ENCODE measurements at regions of chr13 and their contacts with region 1.

Region 1: DNA sequence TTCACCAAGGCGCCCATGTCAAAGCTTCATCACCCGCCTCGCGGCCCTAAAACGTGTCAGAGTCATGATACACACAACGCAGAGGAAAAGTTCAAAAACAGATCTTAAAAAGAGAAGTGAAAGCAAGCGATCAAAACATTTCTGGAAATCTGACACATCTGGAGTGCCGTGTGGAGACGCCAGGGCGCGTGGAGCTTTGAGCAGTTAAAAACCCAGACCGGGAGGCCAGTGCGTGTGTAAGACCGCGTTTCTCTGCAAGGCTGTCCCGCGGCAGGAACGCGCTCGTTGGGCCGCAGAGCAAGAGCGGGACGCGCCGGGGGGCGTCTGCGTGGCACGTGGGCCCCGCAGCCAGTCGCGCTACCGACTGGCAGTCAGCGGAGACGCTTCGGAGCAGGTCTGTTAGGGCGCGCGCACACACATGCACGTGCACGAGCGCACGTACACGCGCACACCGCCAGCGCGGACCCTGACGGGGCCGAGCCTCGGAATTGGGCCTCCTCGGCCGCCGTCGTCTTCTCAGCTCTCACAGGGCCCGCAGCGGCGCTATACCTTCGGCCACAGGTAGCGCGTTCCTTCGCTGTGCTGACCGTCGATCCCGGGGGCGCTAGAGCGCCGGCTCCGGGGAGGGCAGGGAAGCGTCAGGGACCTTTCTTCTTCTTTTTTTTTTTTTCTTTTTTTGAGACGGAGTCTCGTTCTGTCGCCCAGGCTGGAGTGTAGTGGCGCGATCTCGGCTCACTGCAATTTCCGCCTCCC is 35.8 kb downstream of the RNF6 start:
- DNase-seq: peak; percentile 93
- H3K4me3 Mint-ChIP-seq: peak overlapping the region; percentile 86
- H3K27ac Mint-ChIP-seq: peak overlapping the region; percentile 95
- H3K4me1 Mint-ChIP-seq: peaks cover 21% of the 10 kb centered on the region
- H3K27me3 Mint-ChIP-seq: no peaks in the 10 kb centered on the region

Region 2: GRCh38 chr13:25980255-25980654 is 206.0 kb before region 1 on chr13:
- CTCF ChIA-PET with region 1: no interaction called
- POLR2A ChIA-PET with region 1: no interaction called
- intact Hi-C with region 1: no loop called
- DNase-seq: no peak
- H3K4me3 Mint-ChIP-seq: no peak overlapping the region
- H3K27ac Mint-ChIP-seq: no peak overlapping the region
- H3K4me1 Mint-ChIP-seq: peaks cover 7% of the 10 kb centered on the region
- H3K27me3 Mint-ChIP-seq: no peaks in the 10 kb centered on the region

Region 3: DNA sequence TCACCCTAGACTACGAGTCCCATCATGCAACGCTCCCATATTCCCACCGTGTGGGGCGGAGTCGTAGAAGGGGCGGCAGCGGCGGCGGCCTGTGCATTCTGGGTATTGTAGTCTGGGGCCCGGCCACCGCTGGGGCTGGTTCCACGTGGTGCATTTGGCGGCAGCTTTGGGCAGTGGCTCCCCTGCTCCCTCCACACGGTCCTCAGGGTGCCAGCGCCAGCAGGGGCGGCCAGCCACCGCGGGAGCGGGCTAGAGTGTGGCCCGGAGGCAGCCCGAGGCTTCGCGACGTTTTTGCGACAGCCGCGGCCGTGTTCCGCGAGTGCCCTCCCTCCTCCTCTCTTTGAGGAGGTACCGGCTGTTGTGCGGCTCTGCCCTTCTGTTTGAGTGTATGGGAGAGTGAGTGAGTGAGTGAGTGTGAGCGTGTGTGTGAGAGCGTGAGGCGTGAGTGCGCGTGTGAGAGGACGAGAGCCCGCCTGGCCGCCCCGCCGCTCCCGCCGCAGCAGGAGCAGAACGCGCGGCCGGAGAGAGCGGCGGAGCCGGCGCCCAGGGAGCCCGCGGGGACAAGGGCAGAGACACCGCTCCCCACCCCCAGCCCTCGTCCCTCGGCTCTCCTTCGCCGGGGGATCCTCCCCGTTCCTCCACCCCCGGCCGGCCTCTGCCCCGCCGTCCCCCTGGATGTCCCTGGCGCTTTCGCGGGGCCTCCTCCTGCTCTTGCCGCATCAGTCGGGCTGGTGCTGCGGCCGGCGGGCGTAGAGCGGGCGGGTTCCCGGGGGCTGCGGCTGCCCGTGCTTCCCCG is 67.7 kb after region 1 on chr13 and contains the start of gene CDK8:
- CTCF ChIA-PET with region 1: interaction called, 23 read pairs
- POLR2A ChIA-PET with region 1: no interaction called
- intact Hi-C with region 1: loop called (anchors 1 kb)
- DNase-seq: peak; percentile 91
- H3K4me3 Mint-ChIP-seq: peak within 1 kb of the TSS; percentile 84
- H3K27ac Mint-ChIP-seq: peak within 1 kb of the TSS; percentile 67
- H3K4me1 Mint-ChIP-seq: peaks cover 37% of the 10 kb centered on the region
- H3K27me3 Mint-ChIP-seq: no peaks in the 10 kb centered on the region
- total RNA-seq, gene CDK8: 14.6 to 15.0 TPM

Region 4: GRCh38 chr13:26406791-26407190 is 220.5 kb after region 1 on chr13:
- CTCF ChIA-PET with region 1: interaction called, 11 read pairs
- POLR2A ChIA-PET with region 1: interaction called, 3 read pairs
- intact Hi-C with region 1: loop called (anchors 10 kb)
- DNase-seq: no peak
- H3K4me3 Mint-ChIP-seq: no peak overlapping the region
- H3K27ac Mint-ChIP-seq: no peak overlapping the region
- H3K4me1 Mint-ChIP-seq: no peaks in the 10 kb centered on the region
- H3K27me3 Mint-ChIP-seq: no peaks in the 10 kb centered on the region

Region 5: DNA sequence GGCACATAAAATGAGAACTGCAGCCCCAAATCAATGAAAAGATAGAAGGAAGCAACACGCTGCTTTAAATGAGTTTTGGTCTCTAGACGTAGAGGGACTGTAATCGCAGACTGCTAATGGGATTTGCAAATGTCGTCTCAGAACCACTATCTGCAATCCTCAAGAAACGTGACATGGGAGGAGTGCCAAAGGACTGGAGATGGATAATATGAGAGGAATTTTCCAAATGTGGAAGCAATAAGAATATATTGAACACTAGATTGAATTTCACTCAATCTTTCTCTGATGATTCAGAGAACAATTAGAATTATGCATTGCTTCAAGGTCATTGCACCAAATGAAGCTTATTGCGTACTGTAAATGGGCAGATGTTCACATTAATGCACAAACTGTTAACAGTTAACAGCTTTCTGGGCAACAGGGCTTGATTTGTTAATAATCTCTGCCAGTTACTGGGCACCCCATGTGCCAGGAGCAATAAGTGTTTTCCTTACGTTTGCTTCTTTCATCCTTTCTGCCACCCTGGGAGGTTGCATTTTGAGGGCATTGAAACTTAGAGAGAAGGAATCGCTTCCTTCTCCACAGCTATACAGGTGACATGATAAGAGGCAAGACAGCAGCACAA is 308.4 kb after region 1 on chr13:
- CTCF ChIA-PET with region 1: interaction called, 164 read pairs
- POLR2A ChIA-PET with region 1: interaction called, 4 read pairs
- intact Hi-C with region 1: loop called (anchors 1 kb)
- DNase-seq: no peak
- H3K4me3 Mint-ChIP-seq: no peak overlapping the region
- H3K27ac Mint-ChIP-seq: no peak overlapping the region
- H3K4me1 Mint-ChIP-seq: no peaks in the 10 kb centered on the region
- H3K27me3 Mint-ChIP-seq: peaks cover 8% of the 10 kb centered on the region

Region 6: GRCh38 chr13:26698392-26699196 is 512.3 kb after region 1 on chr13:
- CTCF ChIA-PET with region 1: interaction called, 153 read pairs
- POLR2A ChIA-PET with region 1: interaction called, 9 read pairs
- intact Hi-C with region 1: loop called (anchors 1 kb)
- DNase-seq: peak; percentile 87
- H3K4me3 Mint-ChIP-seq: no peak overlapping the region
- H3K27ac Mint-ChIP-seq: no peak overlapping the region
- H3K4me1 Mint-ChIP-seq: no peaks in the 10 kb centered on the region
- H3K27me3 Mint-ChIP-seq: peaks cover 8% of the 10 kb centered on the region

Region 7: DNA sequence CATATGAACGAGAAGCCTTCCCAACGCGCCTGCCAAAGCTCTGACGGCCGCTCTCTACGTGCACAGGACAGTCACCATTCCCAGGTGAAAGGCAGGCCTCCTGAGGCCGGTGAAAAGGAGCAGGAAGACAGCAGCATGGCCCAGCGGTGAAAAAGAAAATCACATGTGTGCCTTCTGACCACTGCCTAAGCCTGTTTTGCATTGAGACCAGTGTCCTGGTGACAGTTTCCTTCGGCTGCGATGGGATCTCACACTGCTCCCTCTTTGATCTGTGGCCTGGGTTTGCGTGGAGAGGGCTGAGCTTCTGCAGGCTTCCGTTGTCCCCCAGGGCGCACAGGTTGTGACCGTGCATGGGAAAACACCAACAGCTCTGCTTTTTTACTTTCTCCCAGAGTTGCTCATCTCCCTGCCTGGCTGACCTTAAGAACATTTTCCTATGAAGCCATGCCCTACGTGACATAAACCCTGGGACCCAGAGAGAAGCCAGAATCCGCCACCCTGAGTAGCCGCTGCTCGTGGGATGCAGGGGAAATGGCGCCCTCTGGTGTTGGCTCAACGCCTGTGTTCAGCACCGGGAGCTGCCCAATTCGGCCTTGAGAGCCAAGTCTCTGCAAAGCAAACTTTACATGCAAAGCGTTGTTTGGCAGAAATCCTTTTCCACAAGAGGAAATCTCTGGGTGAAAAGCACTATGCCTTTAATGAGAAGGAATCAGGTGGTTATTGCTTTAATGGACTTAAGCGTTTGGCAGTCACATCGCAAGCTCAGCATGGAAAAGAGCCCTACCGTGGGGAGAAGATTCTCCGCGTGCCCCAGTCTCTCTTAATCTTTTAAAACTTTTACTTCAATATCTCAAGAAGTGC is 686.5 kb after region 1 on chr13:
- CTCF ChIA-PET with region 1: interaction called, 13 read pairs
- POLR2A ChIA-PET with region 1: no interaction called
- intact Hi-C with region 1: no loop called
- DNase-seq: peak; percentile 68
- H3K4me3 Mint-ChIP-seq: no peak overlapping the region
- H3K27ac Mint-ChIP-seq: no peak overlapping the region
- H3K4me1 Mint-ChIP-seq: no peaks in the 10 kb centered on the region
- H3K27me3 Mint-ChIP-seq: peaks cover 4% of the 10 kb centered on the region